Testis (tissue), 5 donors: ENCODE measurements at regions of chr5 and their contacts with region 1.

Region 1: DNA sequence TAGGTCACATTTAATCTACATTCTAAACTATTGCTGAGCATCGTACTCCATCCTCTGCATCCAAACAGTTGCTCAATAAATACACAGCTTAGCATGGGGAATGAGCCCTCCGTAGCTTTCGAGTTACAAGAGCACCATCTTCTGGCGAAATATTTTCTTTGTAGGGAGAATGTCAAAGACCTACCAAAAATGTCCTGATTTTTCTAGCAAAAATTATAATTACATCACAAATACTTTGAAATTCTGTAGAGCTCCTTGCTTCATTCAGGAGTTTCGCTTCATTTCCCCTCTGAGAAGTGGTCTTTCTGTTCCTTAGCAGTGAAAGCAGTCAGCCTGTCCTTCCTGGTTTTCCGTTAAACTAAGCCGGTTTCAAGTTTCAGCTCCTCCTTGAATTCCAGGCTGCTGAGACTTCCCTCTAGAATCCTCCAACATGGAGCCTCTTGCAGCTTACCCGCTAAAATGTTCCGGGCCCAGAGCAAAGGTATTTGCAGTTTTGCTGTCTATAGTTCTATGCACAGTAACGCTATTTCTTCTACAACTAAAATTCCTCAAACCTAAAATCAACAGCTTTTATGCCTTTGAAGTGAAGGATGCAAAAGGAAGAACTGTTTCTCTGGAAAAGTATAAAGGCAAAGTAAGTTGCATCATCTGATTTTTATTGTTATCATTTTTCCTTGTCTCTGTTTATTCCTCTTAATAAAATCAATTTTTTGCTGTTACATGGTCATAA is at the start of gene GPX8:
- DNase-seq: peak; percentile 56
- H3K4me3 ChIP-seq: peak within 1 kb of the TSS; percentile 33 to 54
- H3K27ac ChIP-seq: peak within 1 kb of the TSS; percentile 60 to 80
- H3K4me1 ChIP-seq: no peaks in the 10 kb centered on the region
- H3K27me3 ChIP-seq: no peaks in the 10 kb centered on the region
- CTCF ChIP-seq: peak; percentile 21 to 48 (median 47)
- POLR2A ChIP-seq: no peak
- total RNA-seq, gene GPX8: 8.2 to 12.3 TPM

Region 2: DNA sequence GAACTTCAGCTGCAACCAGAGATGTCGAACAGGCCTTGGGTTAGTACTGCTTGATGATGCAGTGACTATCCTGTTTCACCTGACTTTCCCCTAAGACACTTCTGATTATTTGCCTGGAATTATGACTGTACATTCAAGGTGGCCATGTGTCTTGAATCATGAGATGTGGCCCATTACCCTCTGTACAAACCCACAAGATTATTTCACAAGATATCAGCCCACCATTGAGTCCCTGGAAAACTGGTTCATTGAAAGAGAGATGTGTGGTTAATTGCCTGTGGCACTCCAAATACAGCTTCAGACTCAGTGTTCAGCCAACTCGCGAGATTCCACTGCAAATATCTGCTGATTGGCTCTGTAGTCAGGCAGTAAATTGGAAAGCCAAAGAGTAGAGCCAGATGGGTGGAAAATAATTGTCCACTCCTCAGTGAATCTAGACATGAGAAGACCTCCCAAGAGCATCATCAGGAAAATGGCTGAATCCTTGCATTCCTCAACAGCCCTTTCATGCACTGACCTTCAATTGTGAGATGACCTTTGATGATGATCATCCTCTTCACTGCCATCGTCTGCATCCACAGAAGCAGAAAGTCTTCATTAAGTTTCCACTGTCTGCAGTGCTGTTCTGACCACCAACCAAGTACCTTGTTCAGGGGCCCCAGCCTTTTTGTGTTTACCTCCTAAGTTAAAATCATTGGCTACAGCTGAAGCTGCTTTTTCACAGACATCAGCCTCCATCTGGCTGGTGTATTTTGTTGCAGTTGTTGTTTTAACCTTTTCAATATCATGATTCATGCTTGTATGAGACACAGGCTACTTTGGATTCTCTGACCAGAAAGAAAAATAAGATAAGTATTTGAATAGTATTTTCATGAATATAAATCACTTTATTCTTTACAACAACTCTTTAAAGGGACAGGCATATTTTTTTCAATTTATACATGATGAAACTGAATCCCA is 249.7 kb before region 1 on chr5:
- intact Hi-C with region 1: loop called (anchors 10 kb)
- DNase-seq: no peak
- H3K4me3 ChIP-seq: no peak overlapping the region
- H3K27ac ChIP-seq: no peak overlapping the region
- H3K4me1 ChIP-seq: no peaks in the 10 kb centered on the region
- H3K27me3 ChIP-seq: no peaks in the 10 kb centered on the region
- CTCF ChIP-seq: no peak
- POLR2A ChIP-seq: no peak

Region 3: GRCh38 chr5:54985301-54986268 is 174.3 kb before region 1 on chr5 and contains the start of gene ESM1:
- intact Hi-C with region 1: no loop called
- DNase-seq: no peak
- H3K4me3 ChIP-seq: peak within 1 kb of the TSS in 1 of 2 donors; percentile 14
- H3K27ac ChIP-seq: no peak within 1 kb of the TSS
- H3K4me1 ChIP-seq: no peaks in the 10 kb centered on the region
- H3K27me3 ChIP-seq: no peaks in the 10 kb centered on the region
- CTCF ChIP-seq: no peak
- POLR2A ChIP-seq: no peak
- total RNA-seq, gene ESM1: 0.50 to 0.87 TPM